ENCODE measurements at regions of chr9 and their contacts with region 1.

Region 1: GRCh38 chr9:33081128-33081851 is 4.8 kb upstream of the SMU1 start:
- DNase-seq: peak; percentile 49 to 56
- H3K4me3 ChIP-seq: no peak overlapping the region
- H3K27ac ChIP-seq: no peak overlapping the region
- H3K4me1 ChIP-seq: peaks cover 17% of the 10 kb centered on the region
- H3K27me3 ChIP-seq: no peaks in the 10 kb centered on the region
- CTCF ChIP-seq: peak; percentile 77

Region 2: GRCh38 chr9:33106827-33107621 is 25.7 kb after region 1 on chr9:
- CTCF ChIA-PET with region 1: no interaction called
- POLR2A ChIA-PET with region 1: no interaction called
- intact Hi-C with region 1: loop called (anchors 2 kb)
- DNase-seq: peak; percentile 75 to 81
- H3K4me3 ChIP-seq: no peak overlapping the region
- H3K27ac ChIP-seq: peak overlapping the region; percentile 44
- H3K4me1 ChIP-seq: peaks cover 42% of the 10 kb centered on the region
- H3K27me3 ChIP-seq: no peaks in the 10 kb centered on the region
- CTCF ChIP-seq: no peak

Region 3: DNA sequence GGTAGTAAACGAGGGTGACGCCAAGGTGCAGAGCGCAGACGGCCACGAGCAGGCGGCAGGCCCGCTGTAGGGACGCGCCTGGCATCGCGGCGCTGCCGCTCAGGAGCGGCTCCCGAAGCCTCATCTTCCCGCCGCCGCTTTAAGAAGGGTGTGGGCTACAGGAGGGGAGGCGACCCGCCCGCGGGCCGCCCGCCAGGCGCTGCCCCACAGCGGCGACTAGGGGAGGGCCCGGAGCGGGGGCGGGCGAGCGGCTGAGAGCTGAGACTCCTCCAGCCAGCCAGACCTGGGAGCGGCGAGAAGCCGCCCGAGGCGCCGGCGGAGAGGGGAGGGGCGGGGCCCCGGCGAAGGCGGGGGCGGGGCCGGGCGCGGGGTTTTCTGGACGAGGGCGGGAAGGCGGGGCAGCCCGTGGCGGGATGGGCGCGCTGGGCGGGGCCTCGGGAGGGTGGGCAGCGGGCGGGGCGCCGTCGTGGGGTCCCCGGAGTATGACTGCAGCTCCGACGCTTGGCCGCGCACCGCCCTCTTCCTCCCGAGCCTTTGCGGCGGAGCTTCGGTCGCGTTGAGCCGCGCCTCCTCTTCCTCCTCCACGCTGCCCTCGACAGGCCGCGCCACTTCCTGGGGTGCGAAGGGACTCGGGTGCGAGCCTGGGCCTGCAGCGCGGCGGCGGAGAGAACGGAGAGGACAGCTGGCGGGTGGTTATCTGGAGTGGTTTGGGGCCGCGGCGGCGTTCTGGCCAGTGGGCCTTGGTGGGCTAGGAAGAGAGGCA is 85.9 kb after region 1 on chr9 and contains the start of gene B4GALT1:
- CTCF ChIA-PET with region 1: no interaction called
- POLR2A ChIA-PET with region 1: no interaction called
- intact Hi-C with region 1: loop called (anchors 1 kb)
- DNase-seq: peak; percentile 69 to 93
- H3K4me3 ChIP-seq: peak within 1 kb of the TSS; percentile 93
- H3K27ac ChIP-seq: peak within 1 kb of the TSS; percentile 100
- H3K4me1 ChIP-seq: peaks cover 54% of the 10 kb centered on the region
- H3K27me3 ChIP-seq: no peaks in the 10 kb centered on the region
- CTCF ChIP-seq: no peak
- total RNA-seq, gene B4GALT1: 75.6 and 87.2 TPM in 2 replicates